ENCODE measurements at regions of chr4 and their contacts with region 1.

Region 1: GRCh38 chr4:117996891-117997290 is 37.4 kb upstream of the NDST3 start:
- DNase-seq: no peak
- ATAC-seq: no peak

Region 2: DNA sequence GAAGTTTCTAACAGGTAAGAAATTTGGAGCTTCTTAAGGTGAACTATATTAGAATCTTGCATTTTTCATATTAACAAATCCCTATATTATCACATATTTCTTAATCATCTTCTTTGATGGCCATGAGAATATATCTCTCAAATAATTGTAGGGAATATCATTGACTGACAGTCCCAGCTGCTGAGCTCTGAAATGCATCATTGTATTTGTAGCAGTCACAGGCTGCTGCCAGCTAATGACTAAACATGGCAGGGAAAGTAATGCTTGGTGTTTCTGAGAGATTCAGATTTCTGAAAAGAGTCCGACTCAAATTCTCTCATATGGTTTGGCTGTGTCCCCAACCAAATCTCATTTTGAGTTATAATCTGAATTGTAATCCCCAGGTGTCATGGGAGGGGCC is 1083.4 kb before region 1 on chr4:
- intact Hi-C with region 1: loop called (anchors 5 kb)
- DNase-seq: no peak
- ATAC-seq: no peak

Region 3: GRCh38 chr4:118046323-118046722 is 49.4 kb after region 1 on chr4:
- intact Hi-C with region 1: no loop called
- DNase-seq: no peak
- ATAC-seq: no peak